ENCODE measurements at regions of chr14 and their contacts with region 1.

Region 1: DNA sequence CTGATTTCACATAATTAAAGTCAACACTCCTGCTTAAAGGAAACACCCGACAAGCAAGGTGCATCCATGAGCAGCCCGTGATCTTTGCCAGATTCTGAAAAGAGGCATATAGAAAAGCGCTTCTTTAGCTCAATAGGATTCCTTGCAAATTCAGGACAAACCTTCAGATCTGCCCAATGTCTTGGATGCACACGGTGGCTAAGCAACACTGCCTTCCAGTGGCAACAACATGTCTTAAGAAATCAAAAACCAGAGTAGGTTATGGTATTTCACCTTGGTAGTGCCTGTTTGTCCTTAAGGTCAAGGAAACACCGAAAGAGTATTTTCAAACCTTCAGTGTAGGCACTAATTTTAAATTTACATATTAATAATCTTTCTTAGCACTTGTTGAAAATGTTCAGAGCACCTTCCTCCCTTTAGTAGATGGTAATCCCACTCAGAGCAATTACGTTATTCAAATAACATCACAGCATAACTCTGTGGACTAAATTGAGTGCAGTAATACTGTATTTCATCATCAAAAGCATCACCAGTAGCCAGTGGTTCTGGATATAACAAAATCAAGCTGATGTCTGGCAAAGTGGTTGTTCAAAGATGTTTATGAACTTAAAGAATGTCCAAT is 58.0 kb upstream of the CDKN3 start:
- DNase-seq: no peak
- H3K4me3 ChIP-seq: no peak overlapping the region
- H3K27ac ChIP-seq: no peak overlapping the region
- H3K4me1 ChIP-seq: peaks cover 0 to 7% (median 1%) of the 10 kb centered on the region in 4 experiments; a peak in 3 of 7 replicates
- H3K27me3 ChIP-seq: no peaks in the 10 kb centered on the region
- CTCF ChIP-seq: peak in 2 of 3 experiments; percentile 64 to 67; a peak in 3 of 4 replicates
- EP300 ChIP-seq: no peak
- POLR2A ChIP-seq: no peak
- RAD21 ChIP-seq: peak; percentile 83 to 89

Region 2: DNA sequence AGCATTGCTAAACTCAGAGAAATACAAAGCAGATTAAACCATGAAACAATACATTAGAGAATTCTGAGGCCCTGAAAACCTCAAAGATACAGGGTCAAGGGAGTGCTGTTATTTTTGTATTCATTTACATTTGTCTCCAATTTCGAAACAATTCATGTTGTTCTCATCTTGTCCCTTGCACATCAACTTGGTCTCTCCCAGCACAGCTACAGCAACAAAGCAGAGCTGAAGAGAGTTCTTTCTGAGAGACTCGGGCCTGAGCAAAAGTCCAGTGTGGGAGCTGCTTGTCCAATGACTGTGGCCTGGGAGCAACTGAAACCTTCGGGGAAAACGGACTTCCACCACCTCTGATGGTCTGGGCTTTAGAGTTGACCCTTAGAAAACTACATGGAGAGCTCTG is 21.4 kb before region 1 on chr14:
- CTCF ChIA-PET with region 1: interaction called, 11 read pairs
- POLR2A ChIA-PET with region 1: no interaction called
- DNase-seq: no peak
- H3K4me3 ChIP-seq: no peak overlapping the region
- H3K27ac ChIP-seq: no peak overlapping the region
- H3K4me1 ChIP-seq: no peaks in the 10 kb centered on the region
- H3K27me3 ChIP-seq: no peaks in the 10 kb centered on the region; a peak in 1 of 7 replicates
- CTCF ChIP-seq: no peak
- EP300 ChIP-seq: no peak
- POLR2A ChIP-seq: no peak
- RAD21 ChIP-seq: no peak

Region 3: DNA sequence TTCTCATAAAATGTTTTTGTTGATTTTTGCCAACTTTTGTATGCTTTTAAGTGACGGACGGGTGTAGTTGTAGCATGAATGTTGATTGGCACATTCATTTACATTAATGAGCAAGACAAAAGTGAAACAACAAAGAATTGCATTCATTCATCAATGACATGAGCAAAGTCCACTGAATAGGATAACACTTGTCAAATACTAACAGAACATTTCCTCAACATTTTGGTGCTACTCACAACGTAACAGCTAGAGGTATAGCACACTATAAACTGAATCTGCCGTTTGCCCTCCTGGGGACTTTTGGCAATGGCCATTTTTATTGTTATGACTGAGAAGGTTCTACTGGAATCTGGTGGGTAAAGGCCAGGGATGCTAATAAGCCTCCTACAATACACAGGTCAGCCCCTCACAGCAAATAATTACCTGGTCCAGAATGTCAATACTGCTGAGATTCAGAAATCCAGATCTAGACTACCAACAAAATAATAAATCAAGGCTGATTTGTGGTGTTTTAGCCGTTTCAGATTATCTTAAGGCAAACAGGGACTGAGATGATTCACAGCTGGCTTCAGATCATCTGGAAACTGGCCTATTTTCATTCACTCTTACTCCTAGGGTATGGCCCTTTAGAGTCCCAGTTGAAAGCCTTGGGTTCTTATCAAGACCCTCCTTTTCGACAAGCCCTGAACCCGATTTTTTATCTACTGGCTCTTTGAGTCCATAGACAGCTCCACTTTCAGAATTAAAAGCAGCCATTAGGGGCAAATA is 35.5 kb after region 1 on chr14:
- CTCF ChIA-PET with region 1: no interaction called
- POLR2A ChIA-PET with region 1: no interaction called
- DNase-seq: peak in 1 of 2 experiments; percentile 30
- H3K4me3 ChIP-seq: no peak overlapping the region
- H3K27ac ChIP-seq: no peak overlapping the region
- H3K4me1 ChIP-seq: peaks cover 1 to 11% (median 3%) of the 10 kb centered on the region in 4 experiments; a peak in 3 of 7 replicates
- H3K27me3 ChIP-seq: no peaks in the 10 kb centered on the region
- CTCF ChIP-seq: no peak
- EP300 ChIP-seq: no peak
- POLR2A ChIP-seq: no peak
- RAD21 ChIP-seq: no peak

Region 4: DNA sequence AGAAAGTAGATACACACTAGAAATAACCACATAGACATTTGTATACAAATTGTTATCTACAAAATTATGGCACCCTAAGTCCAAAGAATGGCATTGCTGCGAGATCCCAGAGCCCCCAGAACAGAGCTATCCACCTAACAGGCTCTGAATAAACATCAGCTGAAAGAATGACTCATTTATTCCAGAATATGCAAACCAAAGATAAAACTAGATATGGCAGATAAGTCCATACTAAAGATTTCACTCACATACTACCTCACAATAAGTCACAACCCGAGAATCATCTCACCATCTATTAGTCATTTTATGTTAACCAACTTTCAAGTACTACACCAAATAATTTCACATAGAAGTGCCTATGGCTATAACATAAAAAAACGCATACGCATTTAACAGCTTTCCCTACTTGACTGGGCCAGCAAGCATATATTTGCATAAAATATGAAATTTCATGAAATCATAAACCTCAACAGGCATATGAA is 96.7 kb after region 1 on chr14:
- CTCF ChIA-PET with region 1: no interaction called
- POLR2A ChIA-PET with region 1: no interaction called
- DNase-seq: no peak
- H3K4me3 ChIP-seq: no peak overlapping the region
- H3K27ac ChIP-seq: no peak overlapping the region
- H3K4me1 ChIP-seq: peaks cover 0 to 9% (median 6%) of the 10 kb centered on the region in 4 experiments; a peak in 5 of 7 replicates
- H3K27me3 ChIP-seq: no peaks in the 10 kb centered on the region
- CTCF ChIP-seq: no peak
- EP300 ChIP-seq: no peak
- POLR2A ChIP-seq: no peak
- RAD21 ChIP-seq: no peak